CD8-positive, alpha-beta T cell (primary cell): ENCODE measurements at regions of chr7 and their contacts with region 1.

Region 1: DNA sequence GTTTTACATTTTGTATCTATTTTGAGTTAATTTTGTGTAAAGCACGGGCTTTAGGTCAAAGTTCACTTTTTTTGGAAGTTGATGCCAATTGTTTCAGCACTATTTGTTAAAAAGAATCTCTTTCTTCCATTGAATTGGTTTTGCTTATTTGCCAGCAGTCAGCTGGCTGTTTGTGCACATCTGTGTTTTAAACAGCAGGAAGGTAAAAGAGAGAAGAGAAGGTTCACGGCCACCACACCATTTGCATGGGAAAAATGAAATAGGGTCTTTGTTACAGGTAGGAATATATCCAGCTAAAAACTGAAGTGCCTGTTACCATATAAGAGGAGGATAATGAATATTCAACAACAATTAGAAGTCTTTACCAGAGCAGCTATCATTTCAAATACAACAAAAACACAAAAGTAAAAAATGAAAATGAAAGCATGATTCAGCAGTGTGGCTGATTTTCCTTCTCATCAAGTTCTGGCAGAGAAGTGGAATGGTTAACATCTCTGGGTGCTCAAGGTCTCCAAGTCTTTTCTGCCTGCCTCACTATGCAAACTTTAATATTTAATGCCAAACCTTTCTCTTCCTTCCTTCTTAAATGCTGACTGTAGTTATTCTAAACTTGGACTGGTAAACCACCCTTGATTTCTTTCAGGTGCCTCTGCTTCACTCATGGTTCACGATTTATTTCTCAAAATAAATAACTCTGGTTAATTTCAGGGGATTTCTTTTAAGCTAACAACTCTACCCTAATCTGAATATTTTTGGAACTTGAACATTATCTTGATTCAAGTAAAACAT is 841.5 kb downstream of the GRM8 start:
- DNase-seq: no peak
- ATAC-seq: no peak
- H3K4me3 ChIP-seq: no peak overlapping the region
- H3K4me3 Mint-ChIP-seq: no peak overlapping the region
- H3K27ac ChIP-seq: no peak overlapping the region
- H3K27ac Mint-ChIP-seq: no peak overlapping the region
- H3K4me1 ChIP-seq: no peaks in the 10 kb centered on the region
- H3K4me1 Mint-ChIP-seq: no peaks in the 10 kb centered on the region
- H3K27me3 ChIP-seq: no peaks in the 10 kb centered on the region
- H3K27me3 Mint-ChIP-seq: no peaks in the 10 kb centered on the region
- CTCF ChIP-seq: no peak

Region 2: GRCh38 chr7:126398851-126399529 is 12.2 kb before region 1 on chr7:
- CTCF ChIA-PET with region 1: no interaction called
- POLR2A ChIA-PET with region 1: no interaction called
- intact Hi-C with region 1: loop called (anchors 1 kb)
- DNase-seq: no peak
- ATAC-seq: no peak
- H3K4me3 ChIP-seq: no peak overlapping the region
- H3K4me3 Mint-ChIP-seq: no peak overlapping the region
- H3K27ac ChIP-seq: no peak overlapping the region
- H3K27ac Mint-ChIP-seq: no peak overlapping the region
- H3K4me1 ChIP-seq: no peaks in the 10 kb centered on the region
- H3K4me1 Mint-ChIP-seq: no peaks in the 10 kb centered on the region
- H3K27me3 ChIP-seq: no peaks in the 10 kb centered on the region
- H3K27me3 Mint-ChIP-seq: no peaks in the 10 kb centered on the region
- CTCF ChIP-seq: no peak